GM13976 (cell line): ENCODE measurements at regions of chr3 and their contacts with region 1.

Region 1: DNA sequence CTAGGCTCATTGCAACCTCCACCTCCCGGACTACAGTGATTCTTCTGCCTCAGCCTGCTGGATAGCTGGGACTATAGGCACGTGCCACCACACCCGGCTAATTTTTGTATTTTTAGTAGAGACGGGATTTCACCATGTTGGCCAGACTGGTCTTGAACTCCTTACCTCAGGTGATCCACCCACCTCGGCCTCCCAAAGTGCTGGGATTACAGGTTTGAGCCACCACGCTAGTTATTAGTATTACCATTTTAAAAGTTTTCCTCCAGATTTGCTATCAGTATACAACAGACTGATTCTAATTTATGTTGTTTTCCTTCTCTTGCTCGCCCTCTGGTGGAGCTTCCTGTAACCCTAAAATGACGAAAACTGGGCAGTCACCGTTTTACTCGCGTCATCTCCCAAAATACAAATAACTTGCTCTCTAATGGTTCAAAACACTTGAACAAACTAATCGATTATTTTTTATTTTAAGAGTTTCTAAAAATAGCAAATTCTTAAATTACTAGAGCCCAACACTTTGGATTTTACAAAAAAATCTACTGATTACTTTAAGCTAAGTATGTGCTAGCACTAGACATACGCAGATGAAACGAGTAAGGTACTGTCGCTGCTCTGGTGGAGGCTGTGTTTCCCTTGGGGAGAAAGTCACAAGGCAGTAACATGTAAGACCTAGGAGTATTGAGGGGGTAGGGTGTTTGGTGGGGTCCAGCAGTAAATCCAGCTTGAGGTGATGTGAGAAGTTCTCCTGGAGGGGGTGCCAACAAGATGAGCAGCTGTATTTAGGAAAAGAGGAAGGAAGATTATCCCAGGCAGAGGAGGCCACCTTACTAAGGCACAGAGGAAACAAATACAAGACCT is 203.3 kb downstream of the MBNL1 start:
- DNase-seq: peak; percentile 37
- CTCF ChIP-seq: peak; percentile 70

Region 2: GRCh38 chr3:151439652-151440129 is 1032.4 kb before region 1 on chr3:
- in situ Hi-C with region 1: loop called (anchors 25 kb)
- DNase-seq: peak; percentile 46
- CTCF ChIP-seq: peak; percentile 56

Region 3: GRCh38 chr3:152574461-152575079 is 102.5 kb after region 1 on chr3:
- in situ Hi-C with region 1: loop called (anchors 10 kb)
- DNase-seq: peak; percentile 25
- CTCF ChIP-seq: peak; percentile 46